Right ventricle myocardium inferior (tissue), 1 donor: ENCODE measurements at regions of chr15 and their contacts with region 1.

Region 1: GRCh38 chr15:89690276-89691218 is at the starts of genes PEX11A and WDR93:
- DNase-seq: peak; percentile 89
- ATAC-seq: peak; percentile 95
- total RNA-seq, gene PEX11A: 13.7 TPM
- total RNA-seq, gene WDR93: not detected

Region 2: GRCh38 chr15:89647191-89647851 is 43.2 kb before region 1 on chr15:
- intact Hi-C with region 1: loop called (anchors 5 kb)
- DNase-seq: peak; percentile 85
- ATAC-seq: peak; percentile 71

Region 3: DNA sequence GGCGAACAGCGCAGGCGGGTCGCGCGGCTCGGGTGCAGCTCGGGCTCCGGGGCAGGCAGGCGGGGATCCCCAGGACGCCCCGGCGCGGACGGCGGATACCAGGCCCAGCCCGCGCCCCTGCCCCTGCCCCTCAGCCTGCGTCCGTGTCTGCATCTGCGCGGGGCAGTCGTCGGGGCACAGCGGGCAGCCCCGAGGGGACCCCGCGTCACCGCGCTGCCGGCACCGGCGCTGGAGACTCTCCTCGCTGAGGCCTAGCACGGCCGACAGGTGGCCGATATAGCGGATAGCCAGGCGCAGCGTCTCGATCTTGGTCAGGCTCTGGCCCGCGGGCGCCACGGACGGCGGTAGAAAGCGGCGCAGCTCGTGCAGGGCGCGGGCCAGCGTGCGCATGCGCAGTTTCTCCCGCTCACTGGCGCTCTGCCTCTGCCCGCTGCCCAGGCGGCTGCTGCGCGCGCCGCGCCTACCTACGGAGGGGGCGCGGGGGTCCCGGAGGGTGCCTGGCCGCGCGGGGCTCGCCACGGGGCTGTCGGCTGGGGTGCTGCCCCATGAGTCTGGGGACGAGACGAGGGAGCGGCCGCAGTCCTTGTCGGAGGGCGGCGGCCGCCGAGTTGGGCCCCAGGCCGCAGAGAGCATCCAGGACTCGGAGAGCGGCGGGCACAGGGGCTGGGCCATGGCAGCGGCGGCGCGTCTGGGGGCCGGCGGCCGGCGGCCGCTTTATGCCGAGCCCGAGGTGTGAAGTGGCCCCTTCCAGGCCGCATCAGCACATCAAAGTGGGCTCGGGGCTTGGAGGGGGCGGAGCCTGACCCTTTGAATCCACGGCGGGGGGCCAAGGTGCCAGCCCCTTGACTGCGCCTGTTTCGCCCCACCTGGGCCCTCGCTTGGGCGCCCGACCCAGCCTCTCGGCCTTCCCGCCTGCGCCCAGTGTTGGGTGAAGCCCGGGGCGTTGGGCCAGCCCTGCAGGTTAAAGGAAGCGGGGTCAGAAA is 60.3 kb after region 1 on chr15 and contains the start of gene MESP1:
- intact Hi-C with region 1: no loop called
- DNase-seq: peak; percentile 98
- ATAC-seq: peak; percentile 95
- total RNA-seq, gene MESP1: 7.4 TPM